Natural killer cell (primary cell): ENCODE measurements at regions of chr15 and their contacts with region 1.

Region 1: GRCh38 chr15:69475769-69476358 is 23.2 kb downstream of the RPLP1 start:
- DNase-seq: peak; percentile 74 to 85
- ATAC-seq: peak; percentile 84 to 95 (median 93)
- H3K4me3 ChIP-seq: no peak overlapping the region
- H3K4me3 Mint-ChIP-seq: no peak overlapping the region
- H3K27ac ChIP-seq: no peak overlapping the region
- H3K27ac Mint-ChIP-seq: no peak overlapping the region
- H3K4me1 ChIP-seq: peaks cover 17% of the 10 kb centered on the region
- H3K4me1 Mint-ChIP-seq: peaks cover 18 to 25% of the 10 kb centered on the region in 2 donors
- H3K27me3 ChIP-seq: peaks cover 5% of the 10 kb centered on the region
- H3K27me3 Mint-ChIP-seq: peaks cover 0 to 27% of the 10 kb centered on the region in 2 donors
- CTCF ChIP-seq: peak; percentile 97

Region 2: GRCh38 chr15:69523010-69524001 is 47.4 kb after region 1 on chr15:
- intact Hi-C with region 1: loop called (anchors 10 kb)
- DNase-seq: peak; percentile 56 to 65
- ATAC-seq: peak; percentile 57 to 70 (median 67)
- H3K4me3 ChIP-seq: no peak overlapping the region
- H3K4me3 Mint-ChIP-seq: no peak overlapping the region
- H3K27ac ChIP-seq: no peak overlapping the region
- H3K27ac Mint-ChIP-seq: no peak overlapping the region
- H3K4me1 ChIP-seq: no peaks in the 10 kb centered on the region
- H3K4me1 Mint-ChIP-seq: peaks cover 0 to 11% of the 10 kb centered on the region in 2 donors
- H3K27me3 ChIP-seq: no peaks in the 10 kb centered on the region
- H3K27me3 Mint-ChIP-seq: peaks cover 16 to 43% of the 10 kb centered on the region in 2 donors
- CTCF ChIP-seq: peak; percentile 60

Region 3: DNA sequence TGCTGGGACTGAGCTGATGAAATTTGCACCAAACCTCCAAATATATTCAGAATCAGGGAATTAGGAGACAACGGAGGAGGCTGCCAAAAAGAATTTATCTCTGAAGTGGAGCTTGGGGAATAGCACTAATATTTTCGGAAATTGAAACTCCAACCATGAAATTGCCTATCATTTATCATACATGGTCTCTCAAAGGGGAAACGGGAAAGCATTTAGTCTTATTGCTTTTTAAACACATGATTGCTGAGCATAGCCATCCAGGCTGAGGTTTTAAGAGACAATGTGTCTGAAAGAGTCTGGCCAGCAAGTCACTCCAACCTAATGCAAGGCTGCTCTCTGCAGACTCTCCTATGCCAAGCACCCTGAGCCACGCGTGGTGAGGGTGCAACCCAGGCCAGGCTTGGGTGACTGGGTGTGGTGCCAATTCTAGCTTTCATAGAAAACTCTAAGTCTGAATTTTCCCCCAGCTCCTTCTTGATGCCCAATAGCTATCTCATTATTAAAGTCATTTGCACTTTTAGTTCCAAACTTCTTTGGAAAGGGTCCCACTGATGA is 177.0 kb after region 1 on chr15:
- intact Hi-C with region 1: loop called (anchors 2 kb)
- DNase-seq: peak in 1 of 2 donors; percentile 28
- ATAC-seq: peak; percentile 65 to 88 (median 78)
- H3K4me3 ChIP-seq: no peak overlapping the region
- H3K4me3 Mint-ChIP-seq: no peak overlapping the region
- H3K27ac ChIP-seq: no peak overlapping the region
- H3K27ac Mint-ChIP-seq: no peak overlapping the region
- H3K4me1 ChIP-seq: peaks cover 15% of the 10 kb centered on the region
- H3K4me1 Mint-ChIP-seq: peaks cover 17 to 33% of the 10 kb centered on the region in 2 donors
- H3K27me3 ChIP-seq: no peaks in the 10 kb centered on the region
- H3K27me3 Mint-ChIP-seq: peaks cover 51% of the 10 kb centered on the region in 2 donors
- CTCF ChIP-seq: no peak

Region 4: GRCh38 chr15:70463460-70463881 is 987.6 kb after region 1 on chr15:
- intact Hi-C with region 1: loop called (anchors 5 kb)
- DNase-seq: no peak
- ATAC-seq: no peak
- H3K4me3 ChIP-seq: no peak overlapping the region
- H3K4me3 Mint-ChIP-seq: no peak overlapping the region
- H3K27ac ChIP-seq: no peak overlapping the region
- H3K27ac Mint-ChIP-seq: no peak overlapping the region
- H3K4me1 ChIP-seq: peaks cover 33% of the 10 kb centered on the region
- H3K4me1 Mint-ChIP-seq: peaks cover 15 to 25% of the 10 kb centered on the region in 2 donors
- H3K27me3 ChIP-seq: peaks cover 16% of the 10 kb centered on the region
- H3K27me3 Mint-ChIP-seq: peaks cover 54 to 72% of the 10 kb centered on the region in 2 donors
- CTCF ChIP-seq: no peak

Region 5: GRCh38 chr15:70722266-70723121 is 1246.6 kb after region 1 on chr15:
- intact Hi-C with region 1: loop called (anchors 10 kb)
- DNase-seq: peak in 1 of 2 donors; percentile 72
- ATAC-seq: peak in 1 of 3 donors; percentile 51
- H3K4me3 ChIP-seq: no peak overlapping the region
- H3K4me3 Mint-ChIP-seq: no peak overlapping the region
- H3K27ac ChIP-seq: no peak overlapping the region
- H3K27ac Mint-ChIP-seq: no peak overlapping the region
- H3K4me1 ChIP-seq: no peaks in the 10 kb centered on the region
- H3K4me1 Mint-ChIP-seq: peaks cover 5% of the 10 kb centered on the region in 2 donors
- H3K27me3 ChIP-seq: peaks cover 7% of the 10 kb centered on the region
- H3K27me3 Mint-ChIP-seq: peaks cover 3 to 15% of the 10 kb centered on the region in 2 donors
- CTCF ChIP-seq: peak; percentile 92

Region 6: DNA sequence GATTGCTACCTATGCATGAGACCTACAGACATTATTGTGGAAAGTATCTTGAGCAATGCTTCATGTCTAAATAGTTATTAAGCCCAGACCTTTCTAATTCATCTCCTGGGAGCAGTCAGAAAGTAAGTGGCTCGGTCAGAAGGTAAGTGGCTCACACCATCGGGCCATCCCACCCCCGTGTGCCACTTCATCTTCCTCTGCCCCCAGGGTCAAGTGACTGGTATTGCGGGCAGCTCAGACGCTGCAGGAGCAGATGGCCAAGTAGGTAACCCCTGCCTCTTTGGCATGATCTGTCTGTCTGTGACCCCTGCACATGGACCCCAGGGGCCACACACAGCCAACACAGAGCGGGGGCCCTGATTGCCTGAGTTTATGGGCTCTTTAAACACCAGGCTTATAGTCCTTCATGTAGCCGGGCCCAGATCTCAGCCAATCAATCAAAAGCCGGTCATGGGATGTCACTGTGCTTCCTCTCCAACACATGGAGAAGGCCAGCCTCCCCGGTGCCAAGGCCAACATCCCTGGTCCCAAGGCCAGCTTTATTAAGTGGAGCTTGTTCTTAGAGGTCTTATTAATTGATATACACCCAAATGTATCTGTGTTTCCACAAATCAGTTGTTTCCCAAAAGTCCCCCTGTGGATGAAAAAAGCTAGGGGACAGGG is 1335.2 kb after region 1 on chr15:
- intact Hi-C with region 1: loop called (anchors 5 kb)
- DNase-seq: no peak
- ATAC-seq: no peak
- H3K4me3 ChIP-seq: no peak overlapping the region
- H3K4me3 Mint-ChIP-seq: no peak overlapping the region
- H3K27ac ChIP-seq: no peak overlapping the region
- H3K27ac Mint-ChIP-seq: no peak overlapping the region
- H3K4me1 ChIP-seq: no peaks in the 10 kb centered on the region
- H3K4me1 Mint-ChIP-seq: peaks cover 6% of the 10 kb centered on the region in 2 donors
- H3K27me3 ChIP-seq: no peaks in the 10 kb centered on the region
- H3K27me3 Mint-ChIP-seq: peaks cover 0 to 6% of the 10 kb centered on the region in 2 donors
- CTCF ChIP-seq: no peak

Region 7: DNA sequence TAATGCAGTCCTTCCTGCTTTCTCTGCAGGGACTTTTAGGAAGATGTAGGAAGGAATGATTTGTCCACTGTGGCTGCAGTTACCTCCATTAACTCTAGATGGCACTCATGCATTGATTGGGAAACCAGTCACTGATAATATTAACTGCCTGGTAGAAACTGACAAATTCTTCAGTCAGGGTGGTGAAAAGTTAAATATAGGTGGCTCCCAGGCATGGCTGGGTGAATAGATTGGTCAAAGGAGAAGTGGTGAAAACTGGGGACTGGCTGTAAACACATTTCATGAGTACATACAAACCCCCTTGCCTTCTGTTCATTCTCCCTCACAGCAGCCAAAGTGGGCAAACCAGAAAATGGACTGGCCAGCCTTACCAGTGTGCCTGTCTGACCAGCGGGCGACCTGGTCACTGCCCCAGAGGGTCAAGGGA is 1972.8 kb after region 1 on chr15:
- intact Hi-C with region 1: loop called (anchors 10 kb)
- DNase-seq: peak in 1 of 2 donors; percentile 19
- ATAC-seq: no peak
- H3K4me3 ChIP-seq: no peak overlapping the region
- H3K4me3 Mint-ChIP-seq: no peak overlapping the region
- H3K27ac ChIP-seq: no peak overlapping the region
- H3K27ac Mint-ChIP-seq: no peak overlapping the region
- H3K4me1 ChIP-seq: no peaks in the 10 kb centered on the region
- H3K4me1 Mint-ChIP-seq: no peaks in the 10 kb centered on the region
- H3K27me3 ChIP-seq: no peaks in the 10 kb centered on the region
- H3K27me3 Mint-ChIP-seq: peaks cover 0 to 5% of the 10 kb centered on the region in 2 donors
- CTCF ChIP-seq: peak; percentile 61